Dorsolateral prefrontal cortex (tissue), 120 donors: ENCODE measurements at regions of chr2 and their contacts with region 1.

Region 1: DNA sequence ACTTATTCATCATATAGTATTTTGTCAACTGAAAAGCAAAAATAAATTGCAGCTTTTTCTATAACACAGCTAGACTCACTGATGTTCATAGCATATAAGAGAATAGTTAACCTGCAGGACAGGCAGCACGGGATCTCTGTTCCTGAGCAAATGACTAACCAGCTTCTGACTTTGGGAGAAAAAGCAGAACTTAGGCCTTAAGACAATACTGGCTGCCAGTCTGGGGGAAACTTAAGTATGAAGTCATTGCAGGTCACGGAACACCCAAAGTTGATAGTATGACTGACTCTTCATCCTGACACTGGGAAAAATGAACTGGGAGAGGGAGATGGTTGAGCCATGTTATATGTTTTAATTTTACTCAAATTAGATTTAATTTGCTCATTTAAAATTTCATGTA is 113.0 kb downstream of the DPP4 start:
- DNase-seq: no peak
- H3K4me3 ChIP-seq: no peak overlapping the region
- H3K27ac ChIP-seq: peak overlapping the region in 3 of 59 donors; percentile 10 to 39 (median 22)
- H3K27me3 ChIP-seq: no peaks in the 10 kb centered on the region
- CTCF ChIP-seq: no peak

Region 2: GRCh38 chr2:161913865-161914264 is 47.2 kb before region 1 on chr2:
- intact Hi-C with region 1: loop called in 1 of 2 experiments (anchors 2 kb)
- DNase-seq: no peak
- H3K4me3 ChIP-seq: no peak overlapping the region
- H3K27ac ChIP-seq: no peak overlapping the region
- H3K27me3 ChIP-seq: no peaks in the 10 kb centered on the region
- CTCF ChIP-seq: no peak

Region 3: GRCh38 chr2:162058973-162059668 is 98.1 kb after region 1 on chr2:
- intact Hi-C with region 1: no loop called
- DNase-seq: no peak
- H3K4me3 ChIP-seq: no peak overlapping the region
- H3K27ac ChIP-seq: no peak overlapping the region
- H3K27me3 ChIP-seq: no peaks in the 10 kb centered on the region
- CTCF ChIP-seq: no peak

Region 4: DNA sequence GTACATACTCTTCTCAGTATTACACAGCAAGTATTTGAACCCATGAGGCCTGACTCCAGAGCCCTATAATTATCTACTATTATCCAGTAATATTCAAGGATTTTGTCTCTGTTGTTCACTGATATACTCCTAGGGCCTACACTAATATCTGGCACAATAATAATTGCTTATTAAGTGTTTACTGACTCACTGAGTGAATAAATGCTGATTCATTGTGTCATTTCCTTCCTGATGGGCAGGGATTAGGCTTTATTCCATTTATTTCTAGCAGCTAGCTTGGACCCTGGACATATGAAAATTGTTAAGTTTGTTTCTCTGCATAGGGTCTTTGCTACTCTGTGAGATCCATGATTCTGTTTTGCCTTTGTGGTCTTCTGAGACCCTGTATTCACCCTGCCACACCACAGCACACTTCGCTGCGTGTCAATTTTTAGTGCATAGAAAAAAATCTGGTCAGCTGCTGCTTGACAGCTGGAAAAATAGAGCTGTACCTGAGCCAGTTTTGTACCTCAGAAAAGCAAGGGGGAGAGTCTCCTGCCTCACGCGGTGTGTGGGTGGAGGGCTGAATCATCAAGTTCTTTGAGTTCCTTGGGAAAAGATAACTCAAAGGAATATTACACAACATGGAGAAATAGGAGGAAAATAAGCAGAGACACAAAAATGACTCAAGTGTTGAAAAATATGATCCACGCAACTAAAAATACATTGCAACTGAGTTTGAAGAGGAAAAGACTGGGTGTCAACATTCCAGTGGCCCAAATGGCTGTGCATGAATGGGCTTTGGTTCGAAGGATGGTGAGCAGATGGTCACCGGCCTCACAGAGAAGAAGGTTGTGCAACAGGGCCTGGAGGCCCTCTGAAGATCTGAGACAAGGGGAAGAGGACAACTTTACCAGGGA is 131.8 kb after region 1 on chr2:
- intact Hi-C with region 1: no loop called
- DNase-seq: peak in 9 of 10 donors; percentile 21 to 77 (median 54)
- H3K4me3 ChIP-seq: no peak overlapping the region
- H3K27ac ChIP-seq: peak overlapping the region in 51 of 59 donors; percentile 8 to 85 (median 55)
- H3K27me3 ChIP-seq: no peaks in the 10 kb centered on the region
- CTCF ChIP-seq: no peak

Region 5: DNA sequence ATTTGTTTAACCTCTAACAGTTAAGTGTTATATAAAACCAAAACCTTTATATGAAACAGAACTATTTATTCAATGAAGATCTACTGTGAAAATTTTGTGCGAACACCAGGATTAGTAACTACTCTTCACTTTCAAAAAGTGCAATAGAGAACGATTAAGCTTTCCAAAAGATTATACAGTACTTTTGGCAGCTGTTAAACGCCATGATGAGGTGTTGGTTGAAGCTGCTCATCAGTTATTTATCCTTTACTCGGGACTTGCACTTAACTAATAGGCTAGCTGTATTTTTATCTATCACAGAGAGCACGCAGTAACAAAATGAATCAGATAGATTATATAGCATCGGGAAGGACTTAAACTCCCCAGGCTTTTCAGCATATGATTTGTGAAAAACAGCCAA is 496.4 kb after region 1 on chr2:
- intact Hi-C with region 1: no loop called
- DNase-seq: no peak
- H3K4me3 ChIP-seq: peak overlapping the region in 2 of 59 donors; percentile 5 to 13
- H3K27ac ChIP-seq: no peak overlapping the region
- H3K27me3 ChIP-seq: no peaks in the 10 kb centered on the region
- CTCF ChIP-seq: no peak